Activated CD4-positive, alpha-beta memory T cell treated with anti-CD3 and anti-CD28 coated beads, Interleukin-2, amount 10 ng/mL, durations not matched to agents 7 days and 5 days (primary cell): ENCODE measurements at regions of chr15 and their contacts with region 1.

Region 1: GRCh38 chr15:89206908-89207331 is 14.5 kb downstream of the RLBP1 start:
- DNase-seq: peak; percentile 73
- H3K4me3 Mint-ChIP-seq: no peak overlapping the region
- H3K27ac Mint-ChIP-seq: no peak overlapping the region
- H3K4me1 Mint-ChIP-seq: peaks cover 37% of the 10 kb centered on the region
- H3K27me3 Mint-ChIP-seq: peaks cover 1% of the 10 kb centered on the region

Region 2: DNA sequence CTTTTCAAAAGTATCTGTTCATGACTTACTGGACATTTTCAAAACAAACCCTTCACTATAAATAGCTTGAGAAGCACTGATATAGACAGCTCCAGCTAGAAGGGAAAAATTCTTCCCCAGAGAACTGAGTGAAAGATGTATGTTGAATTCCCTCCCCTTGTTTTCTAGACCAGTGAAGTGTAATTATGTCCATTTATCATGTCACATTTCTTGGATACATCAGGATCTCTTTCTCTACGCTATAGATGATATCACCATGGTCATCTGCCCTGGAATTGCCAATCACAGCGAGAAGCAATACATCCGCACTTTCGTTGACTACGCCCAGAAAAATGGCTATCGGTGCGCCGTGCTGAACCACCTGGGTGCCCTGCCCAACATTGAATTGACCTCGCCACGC is 51.8 kb before region 1 on chr15:
- CTCF ChIA-PET with region 1: interaction called, 11 read pairs
- POLR2A ChIA-PET with region 1: no interaction called
- DNase-seq: no peak
- H3K4me3 Mint-ChIP-seq: no peak overlapping the region
- H3K27ac Mint-ChIP-seq: no peak overlapping the region
- H3K4me1 Mint-ChIP-seq: peaks cover 13% of the 10 kb centered on the region
- H3K27me3 Mint-ChIP-seq: no peaks in the 10 kb centered on the region

Region 3: DNA sequence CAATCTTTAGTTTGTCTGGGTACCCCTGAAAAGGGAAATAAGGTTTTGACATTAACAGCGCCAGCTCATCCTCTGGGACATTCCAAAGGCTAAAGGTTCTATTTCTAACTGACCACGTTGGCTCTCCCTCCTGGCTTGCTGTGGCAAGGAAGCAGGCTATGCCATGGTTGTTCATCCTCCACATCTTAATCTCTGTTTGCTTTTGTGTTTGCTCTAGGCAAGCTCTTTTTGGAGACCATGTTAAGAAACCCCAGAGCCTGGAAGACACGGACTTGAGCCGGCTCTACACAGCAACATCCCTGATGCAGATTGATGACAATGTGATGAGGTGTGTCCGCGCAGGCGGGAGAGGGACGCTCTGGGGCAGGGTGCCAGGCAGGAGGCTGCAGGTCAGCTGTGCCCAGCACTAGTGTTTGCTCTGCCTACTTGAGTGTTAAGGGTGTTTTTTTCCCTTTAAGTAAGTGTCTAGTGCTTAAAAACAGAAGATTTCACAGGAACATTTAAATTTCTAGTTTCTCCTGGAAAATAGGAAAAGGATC is 18.9 kb before region 1 on chr15:
- CTCF ChIA-PET with region 1: interaction called, 27 read pairs
- POLR2A ChIA-PET with region 1: interaction called, 5 read pairs
- DNase-seq: no peak
- H3K4me3 Mint-ChIP-seq: no peak overlapping the region
- H3K27ac Mint-ChIP-seq: no peak overlapping the region
- H3K4me1 Mint-ChIP-seq: peaks cover 12% of the 10 kb centered on the region
- H3K27me3 Mint-ChIP-seq: no peaks in the 10 kb centered on the region

Region 4: DNA sequence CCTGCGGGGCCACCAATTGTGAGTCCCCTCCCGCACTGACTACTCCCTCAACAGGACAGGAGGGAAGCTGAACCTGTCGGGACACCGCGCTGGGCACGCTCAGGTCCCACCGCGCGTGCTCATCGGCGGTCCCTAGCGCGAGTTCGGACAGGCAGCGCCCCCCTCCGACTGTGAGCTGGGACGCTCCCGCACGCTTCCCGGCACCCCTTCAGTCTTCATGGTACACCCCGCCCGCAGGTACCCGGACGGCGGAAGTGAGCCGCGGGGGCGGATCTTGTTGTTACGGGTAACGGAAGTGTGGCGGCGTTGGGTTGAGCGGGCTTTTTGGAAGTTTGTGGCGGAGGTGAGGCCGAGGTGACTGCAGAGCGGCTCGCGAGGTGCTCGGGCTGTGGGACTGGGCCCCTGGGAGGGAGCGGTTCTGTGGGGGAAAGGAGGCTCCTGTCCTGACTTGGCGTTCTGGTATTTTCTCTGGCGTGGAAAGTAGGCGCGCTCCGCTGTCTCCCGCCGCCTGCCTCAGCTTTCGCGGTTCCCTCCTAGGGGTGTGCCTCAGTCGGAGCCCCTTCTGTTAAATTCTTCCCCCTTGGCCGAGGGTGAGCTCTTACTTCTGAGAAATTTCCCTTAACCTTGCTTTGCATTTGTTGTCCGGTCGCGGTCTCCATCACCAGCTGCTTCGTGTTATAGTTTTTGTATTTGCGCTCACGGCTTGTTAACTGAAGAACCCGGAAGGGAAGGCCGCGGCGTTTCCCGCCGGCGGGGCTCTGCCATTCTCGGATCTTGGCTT is 37.0 kb after region 1 on chr15 and contains the start of gene FANCI:
- CTCF ChIA-PET with region 1: interaction called, 98 read pairs
- POLR2A ChIA-PET with region 1: interaction called, 40 read pairs
- DNase-seq: peak; percentile 97
- H3K4me3 Mint-ChIP-seq: peak within 1 kb of the TSS; percentile 91
- H3K27ac Mint-ChIP-seq: peak within 1 kb of the TSS; percentile 86
- H3K4me1 Mint-ChIP-seq: peaks cover 43% of the 10 kb centered on the region
- H3K27me3 Mint-ChIP-seq: peaks cover 5% of the 10 kb centered on the region
- total RNA-seq, gene FANCI: 196 TPM

Region 5: DNA sequence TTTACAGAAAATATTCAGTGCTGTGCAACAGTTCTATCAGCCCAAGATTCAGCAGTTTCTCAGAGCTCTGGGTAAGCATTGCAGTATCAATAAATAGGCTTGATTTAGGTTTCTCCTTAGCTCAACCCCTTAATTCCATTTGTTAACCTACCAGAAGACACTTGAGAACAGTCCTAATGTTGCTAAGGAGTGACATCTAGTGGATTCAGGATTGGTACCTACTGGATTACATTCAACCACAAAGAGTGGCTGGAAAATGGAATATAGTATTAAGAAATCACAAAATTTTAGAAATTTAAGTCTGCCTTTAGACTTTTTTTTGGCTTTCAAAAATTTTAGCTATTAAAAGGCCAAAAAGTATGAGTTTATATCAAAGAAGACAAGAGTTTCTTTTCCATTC is 93.0 kb after region 1 on chr15:
- CTCF ChIA-PET with region 1: interaction called, 22 read pairs
- POLR2A ChIA-PET with region 1: no interaction called
- DNase-seq: no peak
- H3K4me3 Mint-ChIP-seq: no peak overlapping the region
- H3K27ac Mint-ChIP-seq: peak overlapping the region; percentile 56
- H3K4me1 Mint-ChIP-seq: peaks cover 53% of the 10 kb centered on the region
- H3K27me3 Mint-ChIP-seq: no peaks in the 10 kb centered on the region

Region 6: GRCh38 chr15:89334510-89335288 is 127.8 kb after region 1 on chr15 and contains the start of gene POLG:
- CTCF ChIA-PET with region 1: interaction called, 17 read pairs
- POLR2A ChIA-PET with region 1: interaction called, 3 read pairs
- DNase-seq: peak; percentile 99
- H3K4me3 Mint-ChIP-seq: peak within 1 kb of the TSS; percentile 84
- H3K27ac Mint-ChIP-seq: peak within 1 kb of the TSS; percentile 93
- H3K4me1 Mint-ChIP-seq: peaks cover 53% of the 10 kb centered on the region
- H3K27me3 Mint-ChIP-seq: peaks cover 8% of the 10 kb centered on the region
- total RNA-seq, gene POLG: 106 to 109 TPM

Region 7: DNA sequence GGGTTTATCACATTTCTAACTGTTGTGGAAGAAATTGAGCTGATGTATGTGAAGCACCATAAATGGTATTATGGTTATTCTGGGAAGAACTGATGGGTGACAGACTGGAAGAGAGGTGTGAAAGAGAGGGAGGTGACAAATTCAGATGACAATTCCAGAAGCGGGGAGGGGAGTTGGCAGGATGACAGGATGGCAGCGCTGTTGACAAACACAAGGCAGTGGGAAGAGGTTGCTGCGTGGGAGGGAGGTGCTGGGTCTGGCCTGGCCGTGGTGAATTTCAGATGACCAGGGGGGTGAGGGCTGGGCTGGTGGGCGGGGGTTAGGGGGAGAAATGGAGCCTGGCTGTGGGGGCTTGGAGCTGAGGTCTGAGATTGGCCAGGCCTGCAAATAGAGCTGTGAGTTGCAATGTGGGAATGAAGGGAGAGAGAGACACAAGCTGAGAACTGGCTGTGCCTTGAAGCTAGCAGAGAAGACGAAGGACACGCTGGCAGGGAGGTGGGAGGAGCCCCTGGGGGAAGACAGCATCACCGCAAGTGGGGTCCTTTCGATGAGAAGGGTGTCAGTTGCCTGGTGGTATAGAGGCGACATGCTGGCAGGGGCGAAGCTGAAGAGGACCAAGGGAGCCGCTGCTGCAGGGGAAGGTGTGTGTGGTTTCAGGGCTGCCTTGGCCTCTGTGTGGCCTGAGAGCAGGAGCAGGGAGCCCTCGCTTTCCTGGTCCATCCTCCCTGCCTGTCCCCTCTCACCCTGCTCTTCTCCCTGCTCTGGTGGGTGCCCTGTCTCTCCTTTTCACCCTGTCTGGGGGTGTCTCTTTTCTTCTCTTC is 283.8 kb after region 1 on chr15:
- CTCF ChIA-PET with region 1: no interaction called
- POLR2A ChIA-PET with region 1: no interaction called
- DNase-seq: no peak
- H3K4me3 Mint-ChIP-seq: no peak overlapping the region
- H3K27ac Mint-ChIP-seq: no peak overlapping the region
- H3K4me1 Mint-ChIP-seq: peaks cover 5% of the 10 kb centered on the region
- H3K27me3 Mint-ChIP-seq: peaks cover 44% of the 10 kb centered on the region